Endothelial cell of umbilical vein (primary cell): ENCODE measurements at regions of chr15 and their contacts with region 1.

Region 1: DNA sequence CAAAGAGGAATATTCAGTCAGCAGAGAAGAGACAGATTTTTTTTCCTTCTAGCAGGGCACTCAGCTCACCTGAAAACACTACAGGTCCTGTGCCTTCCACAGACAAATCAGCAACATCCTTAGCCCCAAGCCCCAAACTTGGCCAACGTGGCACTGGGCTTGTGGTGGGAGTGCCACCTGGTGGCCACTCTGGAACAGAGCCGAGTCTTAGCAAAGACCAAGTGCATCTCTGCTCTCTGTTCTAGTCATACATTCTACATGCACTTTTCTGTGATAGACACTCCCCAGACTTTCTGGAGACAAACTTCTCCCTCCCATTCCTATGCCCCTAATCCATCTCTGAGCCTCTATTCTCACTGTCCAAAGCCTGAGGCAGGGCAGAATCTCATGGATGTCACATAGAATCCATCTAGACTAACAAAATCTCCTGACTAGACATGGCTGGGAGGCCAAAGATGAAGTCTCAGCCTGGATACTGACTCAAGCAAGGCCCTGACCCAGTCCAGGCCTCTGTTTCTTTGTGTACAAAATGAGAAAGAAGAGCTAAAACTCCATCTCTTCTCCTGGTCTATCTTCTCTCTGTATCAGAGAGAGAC is 5.1 kb upstream of the SEMA7A start:
- DNase-seq: peak; percentile 65
- H3K4me3 ChIP-seq: no peak overlapping the region
- H3K27ac ChIP-seq: no peak overlapping the region
- H3K4me1 ChIP-seq: no peaks in the 10 kb centered on the region
- H3K27me3 ChIP-seq: no peaks in the 10 kb centered on the region
- CTCF ChIP-seq: peak; percentile 90 to 95
- POLR2A ChIP-seq: no peak

Region 2: GRCh38 chr15:74053941-74054529 is 384.8 kb before region 1 on chr15:
- CTCF ChIA-PET with region 1: no interaction called
- POLR2A ChIA-PET with region 1: no interaction called
- dilution Hi-C with region 1: no loop called
- intact Hi-C with region 1: no loop called
- DNase-seq: peak; percentile 41
- H3K4me3 ChIP-seq: no peak overlapping the region
- H3K27ac ChIP-seq: no peak overlapping the region
- H3K4me1 ChIP-seq: no peaks in the 10 kb centered on the region
- H3K27me3 ChIP-seq: peaks cover 3 to 12% of the 10 kb centered on the region in 2 experiments
- CTCF ChIP-seq: peak; percentile 19 to 77
- POLR2A ChIP-seq: no peak

Region 3: DNA sequence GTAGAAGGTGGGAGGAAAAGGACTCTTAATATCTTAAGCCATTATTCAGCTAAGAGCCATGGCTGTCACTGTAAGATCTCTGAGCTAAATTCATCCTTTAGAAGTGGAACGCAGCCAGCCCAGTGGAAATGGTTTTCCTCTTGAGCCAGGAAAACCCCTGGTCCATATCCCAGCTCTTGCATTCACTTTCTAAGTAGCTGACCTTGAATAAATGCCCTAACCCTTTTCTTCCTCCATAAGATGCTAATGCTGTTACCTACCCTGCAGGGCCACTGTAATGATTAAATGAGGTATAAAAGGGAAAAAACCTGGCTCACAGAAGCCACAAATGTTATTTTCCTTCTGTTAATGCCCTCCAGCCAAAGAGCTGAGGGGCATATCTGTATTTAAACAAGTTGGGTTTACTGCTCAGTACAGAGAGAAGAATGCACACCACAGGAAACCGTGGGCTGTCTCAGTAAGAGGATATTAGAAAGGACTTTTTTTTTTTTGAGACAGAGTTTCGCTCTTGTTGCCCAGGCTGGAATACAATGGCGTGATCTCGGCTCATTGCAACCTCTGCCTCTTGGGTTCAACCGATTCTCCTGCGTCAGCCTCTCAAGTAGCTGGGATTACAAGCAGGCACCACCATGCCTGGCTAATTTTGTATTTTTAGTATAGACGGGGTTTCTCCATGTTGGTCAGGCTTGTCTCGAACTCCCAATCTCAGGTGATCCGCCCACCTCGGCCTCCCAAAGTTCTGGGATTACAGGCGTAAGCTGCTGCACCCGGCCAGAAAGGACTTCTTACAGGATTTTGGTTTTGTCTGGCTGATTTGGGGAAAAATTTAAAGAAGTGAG is 15.3 kb after region 1 on chr15:
- CTCF ChIA-PET with region 1: interaction called, 26 read pairs
- POLR2A ChIA-PET with region 1: no interaction called
- dilution Hi-C with region 1: no loop called
- intact Hi-C with region 1: no loop called
- DNase-seq: peak; percentile 61
- H3K4me3 ChIP-seq: no peak overlapping the region
- H3K27ac ChIP-seq: no peak overlapping the region
- H3K4me1 ChIP-seq: peaks cover 2% of the 10 kb centered on the region
- H3K27me3 ChIP-seq: no peaks in the 10 kb centered on the region
- CTCF ChIP-seq: no peak
- POLR2A ChIP-seq: no peak

Region 4: GRCh38 chr15:74460871-74461846 is 22.3 kb after region 1 on chr15 and contains the start of gene UBL7:
- CTCF ChIA-PET with region 1: interaction called, 10 read pairs
- POLR2A ChIA-PET with region 1: no interaction called
- dilution Hi-C with region 1: no loop called
- intact Hi-C with region 1: no loop called
- DNase-seq: peak; percentile 98
- H3K4me3 ChIP-seq: peak within 1 kb of the TSS; percentile 61 to 71 (median 69)
- H3K27ac ChIP-seq: peak within 1 kb of the TSS; percentile 80
- H3K4me1 ChIP-seq: peaks cover 9% of the 10 kb centered on the region
- H3K27me3 ChIP-seq: no peaks in the 10 kb centered on the region
- CTCF ChIP-seq: peak in 1 of 2 donors; percentile 25
- POLR2A ChIP-seq: peak; percentile 97
- total RNA-seq, gene UBL7: 31.9 and 32.8 TPM in 2 replicates

Region 5: GRCh38 chr15:74489518-74490338 is 50.9 kb after region 1 on chr15:
- CTCF ChIA-PET with region 1: interaction called, 6 read pairs
- POLR2A ChIA-PET with region 1: no interaction called
- dilution Hi-C with region 1: no loop called
- intact Hi-C with region 1: loop called (anchors 1 kb)
- DNase-seq: peak; percentile 44
- H3K4me3 ChIP-seq: no peak overlapping the region
- H3K27ac ChIP-seq: no peak overlapping the region
- H3K4me1 ChIP-seq: peaks cover 4% of the 10 kb centered on the region
- H3K27me3 ChIP-seq: no peaks in the 10 kb centered on the region
- CTCF ChIP-seq: peak; percentile 44 to 77
- POLR2A ChIP-seq: no peak

Region 6: GRCh38 chr15:74620636-74621545 is 182.1 kb after region 1 on chr15:
- CTCF ChIA-PET with region 1: interaction called, 4 read pairs
- POLR2A ChIA-PET with region 1: no interaction called
- dilution Hi-C with region 1: no loop called
- intact Hi-C with region 1: loop called (anchors 5 kb)
- DNase-seq: peak; percentile 72
- H3K4me3 ChIP-seq: no peak overlapping the region
- H3K27ac ChIP-seq: no peak overlapping the region
- H3K4me1 ChIP-seq: peaks cover 9% of the 10 kb centered on the region
- H3K27me3 ChIP-seq: no peaks in the 10 kb centered on the region
- CTCF ChIP-seq: peak; percentile 99
- POLR2A ChIP-seq: peak; percentile 21

Region 7: GRCh38 chr15:74775132-74775562 is 336.3 kb after region 1 on chr15:
- CTCF ChIA-PET with region 1: no interaction called
- POLR2A ChIA-PET with region 1: no interaction called
- dilution Hi-C with region 1: no loop called
- intact Hi-C with region 1: no loop called
- DNase-seq: no peak
- H3K4me3 ChIP-seq: no peak overlapping the region
- H3K27ac ChIP-seq: no peak overlapping the region
- H3K4me1 ChIP-seq: peaks cover 17% of the 10 kb centered on the region
- H3K27me3 ChIP-seq: peaks cover 0 to under 1% of the 10 kb centered on the region in 2 experiments
- CTCF ChIP-seq: no peak
- POLR2A ChIP-seq: no peak